ENCODE measurements at regions of chr14 and their contacts with region 1.

Region 1: GRCh38 chr14:64540208-64541157 is at the start of gene HSPA2:
- DNase-seq: peak; percentile 97 to 100
- ATAC-seq: peak; percentile 95 to 96
- H3K4me3 ChIP-seq: peak within 1 kb of the TSS; percentile 62
- H3K27ac ChIP-seq: peak within 1 kb of the TSS; percentile 95 to 96
- H3K4me1 ChIP-seq: peaks cover 33% of the 10 kb centered on the region; the same call in 2 of the 3 replicates
- CTCF ChIP-seq: peak; percentile 80
- EP300 ChIP-seq: no peak
- POLR2A ChIP-seq: peak; percentile 100
- RAD21 ChIP-seq: peak; percentile 76 to 88
- polyA plus RNA-seq, gene HSPA2: 50.0 and 59.9 TPM in 2 replicates

Region 2: GRCh38 chr14:64409126-64409920 is 131.2 kb before region 1 on chr14:
- CTCF ChIA-PET with region 1: no interaction called
- POLR2A ChIA-PET with region 1: no interaction called
- DNase-seq: no peak
- ATAC-seq: peak; percentile 39 to 41; a peak in 3 of 6 replicates
- H3K4me3 ChIP-seq: no peak overlapping the region
- H3K27ac ChIP-seq: peak overlapping the region; percentile 47 to 83; a peak in 5 of 6 replicates
- H3K4me1 ChIP-seq: peaks cover 28% of the 10 kb centered on the region
- CTCF ChIP-seq: no peak
- EP300 ChIP-seq: no peak
- POLR2A ChIP-seq: no peak
- RAD21 ChIP-seq: no peak

Region 3: DNA sequence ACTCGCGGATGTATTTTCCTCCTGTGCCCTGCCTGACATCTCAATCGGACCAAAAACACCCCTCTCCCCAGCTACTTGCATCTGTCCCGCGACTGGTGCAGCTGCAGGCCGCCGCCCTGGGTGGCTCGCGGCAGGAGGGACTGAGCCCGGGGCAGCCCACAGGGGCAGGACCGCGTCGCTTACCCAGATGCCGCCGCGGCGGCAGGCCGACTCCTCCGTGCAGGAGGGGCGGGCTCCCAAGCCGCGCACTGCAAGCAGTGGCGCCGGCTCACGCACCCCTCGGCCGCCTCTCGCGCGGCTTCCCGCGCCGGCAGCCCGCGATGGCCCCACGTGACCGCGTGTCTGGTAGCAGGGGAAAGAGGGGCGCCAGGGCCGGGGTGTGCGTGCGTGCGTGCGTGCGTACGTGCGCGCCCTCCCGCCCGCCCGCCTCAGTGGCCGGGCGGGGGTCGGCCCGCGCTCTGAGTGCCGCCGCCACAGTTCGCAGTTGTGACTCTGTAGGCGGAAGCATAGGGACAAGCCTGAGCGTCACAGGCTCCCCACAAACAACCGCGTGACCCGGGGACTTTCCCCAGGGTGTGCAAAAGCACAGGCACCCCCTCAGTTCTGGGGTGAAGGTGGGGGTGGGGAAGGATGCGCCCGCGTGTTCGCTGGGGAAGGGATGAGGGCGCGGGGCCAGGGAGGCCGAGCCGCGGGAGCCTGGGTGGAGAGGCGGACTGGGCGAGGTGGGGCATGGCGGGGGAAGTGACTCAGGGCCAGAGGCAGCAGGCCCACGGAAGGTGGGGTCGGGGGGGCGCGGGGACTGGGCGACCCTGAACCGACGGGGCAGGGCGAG is 36.8 kb before region 1 on chr14 and contains the start of gene ZBTB25:
- CTCF ChIA-PET with region 1: interaction called, 6 read pairs
- POLR2A ChIA-PET with region 1: interaction called, 42 read pairs
- DNase-seq: peak; percentile 80 to 94
- ATAC-seq: peak; percentile 68 to 81
- H3K4me3 ChIP-seq: peak within 1 kb of the TSS; percentile 76
- H3K27ac ChIP-seq: peak within 1 kb of the TSS; percentile 96 to 97
- H3K4me1 ChIP-seq: peaks cover 56% of the 10 kb centered on the region
- CTCF ChIP-seq: no peak
- EP300 ChIP-seq: peak in 1 of 2 experiments; percentile 43; a peak in 2 of 5 replicates
- POLR2A ChIP-seq: peak; percentile 52
- RAD21 ChIP-seq: peak in 1 of 2 experiments; percentile 14; a peak in 1 of 5 replicates
- polyA plus RNA-seq, gene ZBTB25: 15.0 and 16.1 TPM in 2 replicates

Region 4: GRCh38 chr14:64520701-64521100 is 19.8 kb before region 1 on chr14:
- CTCF ChIA-PET with region 1: interaction called, 10 read pairs
- POLR2A ChIA-PET with region 1: interaction called, 7 read pairs
- DNase-seq: peak in 1 of 2 experiments; percentile 42
- ATAC-seq: peak; percentile 45 to 59; a peak in 3 of 6 replicates
- H3K4me3 ChIP-seq: no peak overlapping the region
- H3K27ac ChIP-seq: no peak overlapping the region
- H3K4me1 ChIP-seq: peaks cover 38% of the 10 kb centered on the region
- CTCF ChIP-seq: no peak
- EP300 ChIP-seq: no peak
- POLR2A ChIP-seq: no peak
- RAD21 ChIP-seq: no peak

Region 5: DNA sequence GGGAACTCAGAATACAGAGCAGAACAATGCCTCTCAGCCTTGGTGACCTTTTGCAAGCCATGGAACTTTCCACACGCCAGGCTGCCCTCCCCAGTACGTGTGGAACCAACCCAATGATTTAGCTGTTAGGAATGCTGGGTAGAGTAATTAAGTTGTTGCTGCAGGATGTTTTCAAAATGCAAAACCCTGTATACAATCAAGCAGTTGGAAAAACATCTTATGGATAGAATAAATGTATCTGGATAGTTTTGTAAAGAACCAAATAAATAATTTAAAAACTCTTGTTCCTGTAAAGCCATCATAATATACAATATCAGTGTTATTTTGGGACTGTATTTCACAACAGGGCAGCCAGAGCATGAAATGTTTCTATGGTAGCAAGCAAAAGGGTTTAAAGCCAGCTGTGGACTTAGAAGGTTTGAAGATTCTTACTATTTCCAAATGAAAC is 28.7 kb after region 1 on chr14:
- CTCF ChIA-PET with region 1: no interaction called
- POLR2A ChIA-PET with region 1: interaction called, 20 read pairs
- DNase-seq: peak; percentile 64 to 82
- ATAC-seq: peak; percentile 93 to 96
- H3K4me3 ChIP-seq: no peak overlapping the region
- H3K27ac ChIP-seq: peak overlapping the region; percentile 68 to 85
- H3K4me1 ChIP-seq: peaks cover 34% of the 10 kb centered on the region
- CTCF ChIP-seq: no peak
- EP300 ChIP-seq: no peak
- POLR2A ChIP-seq: no peak
- RAD21 ChIP-seq: no peak

Region 6: DNA sequence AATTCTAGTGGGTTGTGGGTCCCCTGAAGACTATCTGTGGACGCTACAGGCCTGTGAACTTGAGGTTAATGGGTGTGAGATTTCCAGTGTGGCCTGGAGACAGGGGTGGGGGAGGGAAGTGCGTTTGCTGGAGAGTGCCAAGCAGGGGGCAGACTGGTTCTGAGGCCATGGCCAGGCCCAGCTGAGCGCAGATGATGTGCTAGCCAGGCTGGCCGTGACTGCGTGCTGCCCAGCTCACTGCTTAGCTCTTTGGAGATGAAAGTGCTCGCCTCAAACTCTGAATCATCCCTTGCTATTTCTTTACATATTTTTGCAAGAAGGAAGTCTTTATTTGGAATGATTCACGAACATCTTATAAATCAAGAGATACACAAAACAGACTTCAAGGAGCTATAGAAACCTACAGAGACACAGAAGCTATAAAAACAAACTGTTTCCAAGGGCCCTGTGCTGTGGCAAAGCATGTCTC is 88.5 kb after region 1 on chr14:
- CTCF ChIA-PET with region 1: interaction called, 48 read pairs
- POLR2A ChIA-PET with region 1: interaction called, 67 read pairs
- DNase-seq: peak; percentile 83 to 94
- ATAC-seq: peak; percentile 96 to 97
- H3K4me3 ChIP-seq: no peak overlapping the region
- H3K27ac ChIP-seq: peak overlapping the region; percentile 79 to 92
- H3K4me1 ChIP-seq: peaks cover 59% of the 10 kb centered on the region
- CTCF ChIP-seq: no peak
- EP300 ChIP-seq: peak; percentile 52 to 71; a peak in 2 of 5 replicates
- POLR2A ChIP-seq: no peak
- RAD21 ChIP-seq: peak in 1 of 2 experiments; percentile 49; a peak in 2 of 5 replicates

Region 7: GRCh38 chr14:64654246-64654900 is 113.9 kb after region 1 on chr14:
- CTCF ChIA-PET with region 1: interaction called, 6 read pairs
- POLR2A ChIA-PET with region 1: interaction called, 18 read pairs
- DNase-seq: peak; percentile 51 to 78
- ATAC-seq: peak; percentile 75 to 86
- H3K4me3 ChIP-seq: no peak overlapping the region
- H3K27ac ChIP-seq: peak overlapping the region; percentile 65 to 93
- H3K4me1 ChIP-seq: peaks cover 28% of the 10 kb centered on the region
- CTCF ChIP-seq: no peak
- EP300 ChIP-seq: no peak
- POLR2A ChIP-seq: no peak
- RAD21 ChIP-seq: no peak

Region 8: GRCh38 chr14:64764641-64765520 is 224.4 kb after region 1 on chr14:
- CTCF ChIA-PET with region 1: interaction called, 9 read pairs
- POLR2A ChIA-PET with region 1: interaction called, 17 read pairs
- DNase-seq: peak; percentile 76 to 83
- ATAC-seq: peak; percentile 21 to 70; a peak in 4 of 6 replicates
- H3K4me3 ChIP-seq: 0 out of 3 replicates have a peak overlapping the region, but pooled peaks have one; percentile 24
- H3K27ac ChIP-seq: peak overlapping the region; percentile 92 to 93
- H3K4me1 ChIP-seq: peaks cover 64% of the 10 kb centered on the region
- CTCF ChIP-seq: peak; percentile 88
- EP300 ChIP-seq: no peak
- POLR2A ChIP-seq: no peak
- RAD21 ChIP-seq: peak; percentile 88 to 92